A549 (cell line): ENCODE measurements at regions of chr1 and their contacts with region 1.

Region 1: DNA sequence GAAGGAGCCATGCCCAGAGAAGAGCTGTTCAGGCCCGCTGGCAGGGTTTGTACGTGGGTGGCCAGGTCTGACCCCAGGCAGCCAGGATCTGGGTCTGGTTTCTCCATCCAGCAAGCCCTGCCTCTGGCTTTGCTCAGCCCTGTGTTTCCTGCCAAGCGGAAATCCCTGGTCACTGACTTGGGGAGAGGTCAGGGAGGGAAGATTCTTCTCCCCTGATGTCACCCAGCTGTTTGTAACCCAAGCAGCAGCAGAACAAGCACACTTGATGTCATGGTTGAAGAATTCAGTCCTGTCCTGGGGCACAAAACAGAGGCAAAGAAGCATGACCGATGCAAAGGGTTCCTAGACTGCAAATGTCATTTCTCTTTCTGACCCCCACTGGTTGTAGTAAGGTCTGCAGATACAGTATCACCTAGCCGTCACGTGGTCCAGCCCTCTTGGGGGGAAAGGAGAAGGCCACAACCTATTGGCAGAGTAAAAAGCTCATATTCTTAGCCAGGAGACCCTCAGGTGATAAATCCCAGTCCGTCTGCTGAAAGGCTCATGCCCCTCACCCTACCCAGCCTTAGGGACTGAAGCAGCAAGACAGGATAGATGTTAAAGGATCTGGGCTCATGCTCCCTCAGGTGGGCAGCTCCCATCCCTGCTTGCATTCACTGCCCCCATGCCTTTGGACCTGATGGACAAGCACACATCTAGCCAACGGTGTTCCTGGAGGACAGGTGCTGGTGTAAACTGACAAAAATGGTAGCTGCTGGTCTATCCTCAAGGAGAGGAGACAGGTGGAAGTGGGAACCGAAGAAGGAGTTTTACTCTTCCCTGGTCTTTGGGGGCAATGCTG is 120.8 kb downstream of the SYT2 start:
- DNase-seq: peak; percentile 93 to 96
- ATAC-seq: peak; percentile 94 to 95
- H3K4me3 ChIP-seq: 0 out of 3 replicates have a peak overlapping the region, but pooled peaks have one; percentile 3
- H3K27ac ChIP-seq: peak overlapping the region; percentile 80 to 86
- H3K4me1 ChIP-seq: peaks cover 65% of the 10 kb centered on the region
- CTCF ChIP-seq: no peak
- EP300 ChIP-seq: peak; percentile 65 to 66; a peak in 2 of 5 replicates
- POLR2A ChIP-seq: no peak
- RAD21 ChIP-seq: peak; percentile 13 to 52; a peak in 4 of 5 replicates

Region 2: DNA sequence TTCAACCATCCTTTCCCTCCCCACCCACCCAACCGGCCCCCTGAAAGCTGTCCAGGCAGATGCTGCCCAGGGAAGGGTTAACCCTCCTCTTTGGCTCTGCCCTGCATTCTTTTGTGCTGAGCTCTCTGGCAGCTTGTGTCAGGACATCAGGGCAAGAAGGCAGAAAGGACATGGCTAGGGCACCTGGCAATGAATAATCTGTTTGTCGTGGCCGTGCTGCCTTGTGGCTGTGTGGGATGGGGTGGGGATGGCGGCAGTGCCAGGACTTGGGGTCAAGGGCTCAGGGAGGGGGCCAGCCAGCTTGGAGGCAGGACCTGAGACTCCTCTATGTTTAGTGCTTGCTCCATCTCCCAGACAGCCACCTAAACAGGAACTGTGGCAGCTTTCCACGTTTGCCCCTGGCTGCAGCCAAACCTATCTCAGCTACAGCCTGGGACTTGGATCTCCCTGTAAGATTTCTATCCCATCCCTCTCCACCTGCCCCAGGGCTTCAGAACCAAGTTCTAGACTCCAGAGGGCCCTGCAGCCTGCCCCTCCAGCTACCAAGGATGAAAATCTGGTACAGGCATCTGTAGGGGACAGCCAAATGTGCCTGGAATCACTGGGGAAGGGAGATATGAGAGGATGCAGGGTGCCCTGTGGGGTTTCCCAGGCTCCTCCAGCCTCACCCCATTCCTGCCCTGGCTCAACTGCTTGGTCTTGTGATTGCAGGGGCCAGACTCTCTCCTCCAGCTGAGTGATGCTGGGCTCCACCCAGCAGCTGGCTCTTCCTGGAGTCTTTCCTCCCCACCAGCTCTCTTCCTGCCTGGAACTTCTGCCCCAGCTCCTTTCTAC is 476.4 kb before region 1 on chr1:
- CTCF ChIA-PET with region 1: no interaction called
- POLR2A ChIA-PET with region 1: no interaction called
- DNase-seq: peak; percentile 62 to 85
- ATAC-seq: peak; percentile 76 to 80
- H3K4me3 ChIP-seq: no peak overlapping the region
- H3K27ac ChIP-seq: peak overlapping the region; percentile 88 to 94
- H3K4me1 ChIP-seq: peaks cover 73% of the 10 kb centered on the region
- CTCF ChIP-seq: no peak
- EP300 ChIP-seq: no peak; a peak in 1 of 5 replicates
- POLR2A ChIP-seq: no peak
- RAD21 ChIP-seq: peak; percentile 24 to 25; a peak in 3 of 5 replicates

Region 3: DNA sequence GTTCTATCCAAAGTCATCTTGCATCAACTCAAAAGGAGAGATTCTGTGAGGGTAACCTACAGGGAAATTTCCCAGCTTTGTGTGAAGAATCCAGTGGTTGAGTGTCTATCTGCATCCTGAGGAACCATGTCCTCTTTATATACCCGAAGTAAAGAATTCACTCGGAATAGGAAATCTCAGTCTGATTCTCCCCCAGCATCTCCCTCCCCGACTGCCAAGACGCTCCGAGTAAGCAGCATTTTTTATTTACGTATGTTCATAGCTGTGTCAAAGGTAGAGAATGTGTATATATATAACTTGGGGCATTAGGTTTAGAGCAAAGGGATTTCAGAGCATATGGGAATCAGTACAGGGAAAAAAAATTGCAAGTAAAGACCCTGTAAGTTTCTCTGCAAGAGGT is 49.4 kb before region 1 on chr1:
- CTCF ChIA-PET with region 1: no interaction called
- POLR2A ChIA-PET with region 1: no interaction called
- DNase-seq: no peak
- ATAC-seq: no peak
- H3K4me3 ChIP-seq: no peak overlapping the region
- H3K27ac ChIP-seq: no peak overlapping the region
- H3K4me1 ChIP-seq: 0 out of 3 replicates have a peak, but pooled peaks cover 10% of the 10 kb centered on the region
- CTCF ChIP-seq: no peak
- EP300 ChIP-seq: no peak
- POLR2A ChIP-seq: no peak
- RAD21 ChIP-seq: no peak

Region 4: GRCh38 chr1:202571347-202572339 is 17.8 kb before region 1 on chr1:
- CTCF ChIA-PET with region 1: interaction called, 91 read pairs
- POLR2A ChIA-PET with region 1: no interaction called
- DNase-seq: peak; percentile 42 to 53
- ATAC-seq: peak; percentile 58 to 82; a peak in 4 of 6 replicates
- H3K4me3 ChIP-seq: no peak overlapping the region
- H3K27ac ChIP-seq: no peak overlapping the region
- H3K4me1 ChIP-seq: peaks cover 9% of the 10 kb centered on the region
- CTCF ChIP-seq: peak; percentile 76
- EP300 ChIP-seq: no peak
- POLR2A ChIP-seq: no peak
- RAD21 ChIP-seq: peak; percentile 67 to 77